GM23248 (cell line): ENCODE measurements at regions of chr1 and their contacts with region 1.

Region 1: DNA sequence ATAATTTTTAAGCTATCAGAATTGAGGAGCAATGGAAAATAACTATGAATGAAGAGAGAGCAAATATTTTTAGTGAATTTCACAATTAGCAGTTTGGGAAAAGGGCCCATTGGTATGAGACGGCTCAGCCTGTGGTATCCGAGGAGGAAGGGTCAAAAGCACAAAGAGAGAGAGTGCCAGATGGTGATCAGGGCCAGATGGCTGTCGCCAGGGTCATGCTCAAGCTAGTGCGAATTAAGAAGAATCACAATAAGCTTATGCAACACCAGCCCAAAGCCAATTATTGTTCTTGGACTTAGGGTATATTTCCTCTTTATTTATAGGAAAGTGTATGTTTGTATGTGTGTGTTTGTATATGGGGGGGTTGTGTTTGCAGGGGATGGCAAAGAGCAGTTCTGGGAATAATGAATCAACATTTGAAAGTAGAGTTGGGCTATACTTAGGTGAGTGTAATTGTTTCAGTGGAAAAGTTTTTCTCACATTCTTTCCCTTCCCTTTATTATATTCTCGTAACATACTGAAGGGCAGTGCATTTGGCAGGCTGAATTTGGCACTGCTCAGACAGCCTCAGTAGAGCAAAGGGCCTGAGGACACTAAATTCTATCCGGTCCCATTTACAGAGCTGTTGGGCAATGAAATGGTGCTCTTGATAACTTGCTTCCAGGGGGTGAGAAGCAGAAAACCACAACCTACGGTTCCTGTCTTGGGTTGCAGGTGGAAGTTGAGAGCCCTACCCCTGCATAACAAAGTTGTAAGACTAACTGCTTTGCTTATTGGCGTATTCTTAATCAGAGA is 19.5 kb upstream of the DDR2 start:
- DNase-seq: peak; percentile 80
- H3K4me3 ChIP-seq: no peak overlapping the region
- H3K27ac ChIP-seq: peak overlapping the region; percentile 45
- H3K4me1 ChIP-seq: peaks cover 23% of the 10 kb centered on the region
- H3K27me3 ChIP-seq: no peaks in the 10 kb centered on the region

Region 2: GRCh38 chr1:162422662-162423375 is 190.0 kb before region 1 on chr1:
- in situ Hi-C with region 1: no loop called
- DNase-seq: no peak
- H3K4me3 ChIP-seq: no peak overlapping the region
- H3K27ac ChIP-seq: no peak overlapping the region
- H3K4me1 ChIP-seq: no peaks in the 10 kb centered on the region
- H3K27me3 ChIP-seq: no peaks in the 10 kb centered on the region

Region 3: GRCh38 chr1:162765788-162766187 is 153.0 kb after region 1 on chr1:
- in situ Hi-C with region 1: loop called (anchors 10 kb)
- DNase-seq: peak; percentile 21
- H3K4me3 ChIP-seq: no peak overlapping the region
- H3K27ac ChIP-seq: no peak overlapping the region
- H3K4me1 ChIP-seq: no peaks in the 10 kb centered on the region
- H3K27me3 ChIP-seq: no peaks in the 10 kb centered on the region

Region 4: GRCh38 chr1:163174524-163175437 is 562.0 kb after region 1 on chr1:
- in situ Hi-C with region 1: no loop called
- DNase-seq: peak; percentile 83
- H3K4me3 ChIP-seq: peak overlapping the region; percentile 54
- H3K27ac ChIP-seq: no peak overlapping the region
- H3K4me1 ChIP-seq: peaks cover 46% of the 10 kb centered on the region
- H3K27me3 ChIP-seq: no peaks in the 10 kb centered on the region